ENCODE measurements at regions of chr20 and their contacts with region 1.

Region 1: GRCh38 chr20:16939051-16939450 is 190.9 kb downstream of the OTOR start:
- DNase-seq: no peak
- ATAC-seq: no peak
- H3K4me3 ChIP-seq: no peak overlapping the region
- H3K27ac ChIP-seq: no peak overlapping the region
- H3K4me1 ChIP-seq: no peaks in the 10 kb centered on the region
- H3K27me3 ChIP-seq: no peaks in the 10 kb centered on the region
- CTCF ChIP-seq: no peak
- EP300 ChIP-seq: no peak
- POLR2A ChIP-seq: no peak
- RAD21 ChIP-seq: no peak

Region 2: DNA sequence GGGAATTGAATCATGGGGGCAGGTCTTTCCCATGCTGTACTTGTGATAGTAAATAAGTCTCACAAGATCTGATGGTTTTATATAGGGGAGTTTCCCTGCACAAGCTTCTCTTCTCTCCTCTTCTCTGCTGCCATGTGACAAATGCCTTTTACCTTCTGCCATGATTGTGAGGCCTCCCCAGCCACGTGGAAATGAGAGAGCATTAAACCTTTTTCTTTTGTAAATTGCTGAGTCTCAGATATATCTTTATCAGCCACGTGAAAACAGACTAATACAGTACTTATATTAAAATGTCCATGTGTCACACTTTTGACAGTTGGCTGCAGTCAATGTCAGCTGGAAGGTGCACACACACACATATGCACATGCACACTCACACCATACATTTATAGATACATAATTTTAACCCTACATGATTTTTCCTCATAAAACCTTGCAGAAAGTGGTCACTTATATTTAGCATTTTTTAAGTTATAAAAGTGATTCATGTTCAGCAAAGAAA is 61.9 kb before region 1 on chr20:
- CTCF ChIA-PET with region 1: no interaction called
- POLR2A ChIA-PET with region 1: no interaction called
- RAD21 ChIA-PET with region 1: no interaction called
- SMC1A ChIA-PET with region 1: no interaction called
- in situ Hi-C with region 1: no loop called
- intact Hi-C with region 1: no loop called
- DNase-seq: no peak
- ATAC-seq: no peak
- H3K4me3 ChIP-seq: no peak overlapping the region
- H3K27ac ChIP-seq: no peak overlapping the region
- H3K4me1 ChIP-seq: no peaks in the 10 kb centered on the region
- H3K27me3 ChIP-seq: no peaks in the 10 kb centered on the region
- CTCF ChIP-seq: no peak
- EP300 ChIP-seq: no peak
- POLR2A ChIP-seq: no peak
- RAD21 ChIP-seq: no peak

Region 3: DNA sequence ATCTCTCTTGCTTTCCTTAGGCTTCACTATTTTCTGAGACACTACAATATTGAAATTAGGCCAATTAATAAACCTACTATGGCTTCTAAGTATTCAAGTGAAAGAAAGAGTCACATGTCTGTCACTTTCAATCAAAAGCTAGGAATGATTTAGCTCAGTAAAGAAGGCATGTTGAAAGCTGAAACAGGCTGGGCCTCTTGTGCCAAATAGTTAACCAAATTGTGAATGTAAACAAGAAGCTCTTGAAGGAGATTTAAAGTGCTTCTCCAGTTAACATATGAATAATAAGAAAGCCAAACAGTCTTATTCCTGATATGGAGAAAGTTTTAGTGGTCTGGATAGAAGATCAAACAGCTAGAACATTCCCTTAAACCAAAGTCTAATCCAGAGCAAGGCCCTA is 45.4 kb after region 1 on chr20:
- CTCF ChIA-PET with region 1: no interaction called
- POLR2A ChIA-PET with region 1: no interaction called
- RAD21 ChIA-PET with region 1: no interaction called
- SMC1A ChIA-PET with region 1: no interaction called
- in situ Hi-C with region 1: loop called (anchors 5 kb)
- intact Hi-C with region 1: no loop called
- DNase-seq: no peak
- ATAC-seq: no peak
- H3K4me3 ChIP-seq: no peak overlapping the region
- H3K27ac ChIP-seq: no peak overlapping the region
- H3K4me1 ChIP-seq: no peaks in the 10 kb centered on the region
- H3K27me3 ChIP-seq: no peaks in the 10 kb centered on the region
- CTCF ChIP-seq: no peak
- EP300 ChIP-seq: no peak
- POLR2A ChIP-seq: no peak
- RAD21 ChIP-seq: no peak

Measured in GM12878 (cell line).